H1 (cell line): ENCODE measurements at regions of chr1 and their contacts with region 1.

Region 1: GRCh38 chr1:235971571-235972310 is 93.1 kb downstream of the NID1 start:
- DNase-seq: peak; percentile 79 to 94
- H3K4me3 ChIP-seq: peak overlapping the region; percentile 32 to 60 (median 46); a peak in 6 of 8 replicates
- H3K27ac ChIP-seq: peak overlapping the region; percentile 73; the same call in 1 of the 2 replicates
- H3K4me1 ChIP-seq: 0 out of 7 replicates have a peak, but pooled peaks cover 0 to 3% (median 0%) of the 10 kb centered on the region in 4 experiments
- H3K27me3 ChIP-seq: no peaks in the 10 kb centered on the region
- CTCF ChIP-seq: peak; percentile 70 to 88 (median 82)
- EP300 ChIP-seq: 0 out of 3 replicates have a peak, but pooled peaks of 1 of the 2 experiments have one; percentile 8
- POLR2A ChIP-seq: peak; percentile 60 to 78
- RAD21 ChIP-seq: peak; percentile 90 to 93

Region 2: GRCh38 chr1:235783148-235783776 is 188.5 kb before region 1 on chr1:
- CTCF ChIA-PET with region 1: interaction called, 19 read pairs
- POLR2A ChIA-PET with region 1: no interaction called
- DNase-seq: no peak
- H3K4me3 ChIP-seq: no peak overlapping the region
- H3K27ac ChIP-seq: no peak overlapping the region
- H3K4me1 ChIP-seq: no peaks in the 10 kb centered on the region
- H3K27me3 ChIP-seq: no peaks in the 10 kb centered on the region
- CTCF ChIP-seq: peak in 1 of 3 experiments; percentile 12; a peak in 1 of 4 replicates
- EP300 ChIP-seq: no peak
- POLR2A ChIP-seq: no peak
- RAD21 ChIP-seq: peak in 1 of 2 experiments; percentile 65; a peak in 3 of 4 replicates

Region 3: DNA sequence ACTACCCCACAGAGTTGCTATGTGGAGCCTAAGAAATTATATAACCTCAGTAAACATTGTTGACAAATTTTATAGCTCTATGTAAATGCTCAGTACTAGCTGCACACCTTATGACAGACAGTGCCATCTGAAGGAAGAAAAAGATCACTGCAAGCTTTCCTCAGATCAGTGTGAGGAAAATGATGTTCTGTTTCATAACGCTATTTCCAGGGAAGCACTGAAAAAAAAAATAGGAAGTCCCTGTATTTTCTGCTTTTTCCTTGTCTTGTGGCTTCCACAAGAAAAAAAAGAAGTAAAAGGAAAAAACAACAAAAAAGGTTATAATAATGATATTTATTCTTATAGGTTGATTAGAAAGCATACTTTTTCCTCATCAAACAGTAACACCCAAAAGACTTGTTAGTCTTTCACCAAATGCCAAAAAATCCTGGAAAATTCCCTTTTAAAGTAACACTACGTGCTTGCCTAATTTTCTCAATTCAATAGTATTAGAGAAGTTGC is 128.2 kb before region 1 on chr1:
- CTCF ChIA-PET with region 1: interaction called, 18 read pairs
- POLR2A ChIA-PET with region 1: no interaction called
- DNase-seq: no peak
- H3K4me3 ChIP-seq: no peak overlapping the region
- H3K27ac ChIP-seq: no peak overlapping the region
- H3K4me1 ChIP-seq: no peaks in the 10 kb centered on the region
- H3K27me3 ChIP-seq: no peaks in the 10 kb centered on the region
- CTCF ChIP-seq: peak in 2 of 3 experiments; percentile 22 to 41; a peak in 2 of 4 replicates
- EP300 ChIP-seq: no peak
- POLR2A ChIP-seq: no peak
- RAD21 ChIP-seq: peak; percentile 54 to 61

Region 4: GRCh38 chr1:235883261-235883927 is 88.3 kb before region 1 on chr1:
- CTCF ChIA-PET with region 1: no interaction called
- POLR2A ChIA-PET with region 1: no interaction called
- DNase-seq: no peak
- H3K4me3 ChIP-seq: no peak overlapping the region
- H3K27ac ChIP-seq: no peak overlapping the region
- H3K4me1 ChIP-seq: no peaks in the 10 kb centered on the region
- H3K27me3 ChIP-seq: no peaks in the 10 kb centered on the region
- CTCF ChIP-seq: no peak
- EP300 ChIP-seq: no peak
- POLR2A ChIP-seq: no peak
- RAD21 ChIP-seq: no peak

Region 5: DNA sequence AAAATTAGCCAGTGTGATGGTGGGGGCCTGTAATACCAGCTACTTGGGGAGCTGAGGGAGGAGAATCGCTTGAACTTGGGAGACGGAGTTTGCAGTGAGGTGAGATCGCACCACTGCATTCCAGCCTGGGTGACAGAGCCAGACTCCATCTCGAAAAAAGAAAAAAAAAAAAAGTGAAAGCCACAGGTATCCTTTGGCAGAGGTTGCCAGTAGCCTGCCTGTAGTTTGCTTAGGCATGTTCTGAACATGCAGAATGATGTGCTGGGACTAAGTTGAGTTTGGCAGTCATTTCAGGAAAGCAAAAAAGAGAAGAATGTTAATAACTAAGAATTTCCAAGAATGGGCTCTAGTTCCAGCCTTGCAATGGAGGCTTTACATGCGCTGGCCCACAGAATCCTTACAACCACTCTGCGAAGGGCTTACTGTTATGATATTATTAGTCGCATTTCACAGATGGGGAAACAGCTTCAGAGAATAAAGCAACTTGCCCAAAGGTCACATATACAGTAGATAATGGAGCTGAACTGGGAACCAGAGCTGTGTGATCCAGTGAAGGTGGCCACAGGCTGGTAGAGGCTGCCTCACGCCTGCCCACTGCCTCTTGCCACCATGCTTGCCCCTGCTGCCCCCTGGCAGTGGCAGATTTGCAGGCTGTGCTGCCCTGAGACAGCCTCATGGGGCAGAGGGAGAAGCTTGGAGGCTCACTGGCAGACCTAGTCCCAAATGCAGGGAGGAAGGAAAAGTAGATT is 38.5 kb before region 1 on chr1:
- CTCF ChIA-PET with region 1: interaction called, 11 read pairs
- POLR2A ChIA-PET with region 1: no interaction called
- DNase-seq: no peak
- H3K4me3 ChIP-seq: no peak overlapping the region
- H3K27ac ChIP-seq: no peak overlapping the region
- H3K4me1 ChIP-seq: peaks cover 0 to 3% (median 0%) of the 10 kb centered on the region in 4 experiments; a peak in 2 of 7 replicates
- H3K27me3 ChIP-seq: peaks cover 0 to 4% (median 1%) of the 10 kb centered on the region in 4 experiments; a peak in 3 of 7 replicates
- CTCF ChIP-seq: peak; percentile 22 to 33 (median 30)
- EP300 ChIP-seq: no peak
- POLR2A ChIP-seq: no peak
- RAD21 ChIP-seq: peak in 1 of 2 experiments; percentile 16; a peak in 1 of 4 replicates

Region 6: GRCh38 chr1:235960809-235961208 is 10.9 kb before region 1 on chr1:
- CTCF ChIA-PET with region 1: interaction called, 16 read pairs
- POLR2A ChIA-PET with region 1: interaction called, 3 read pairs
- DNase-seq: no peak
- H3K4me3 ChIP-seq: no peak overlapping the region
- H3K27ac ChIP-seq: no peak overlapping the region
- H3K4me1 ChIP-seq: no peaks in the 10 kb centered on the region; a peak in 2 of 7 replicates
- H3K27me3 ChIP-seq: no peaks in the 10 kb centered on the region; a peak in 1 of 7 replicates
- CTCF ChIP-seq: no peak
- EP300 ChIP-seq: no peak
- POLR2A ChIP-seq: no peak
- RAD21 ChIP-seq: no peak

Region 7: DNA sequence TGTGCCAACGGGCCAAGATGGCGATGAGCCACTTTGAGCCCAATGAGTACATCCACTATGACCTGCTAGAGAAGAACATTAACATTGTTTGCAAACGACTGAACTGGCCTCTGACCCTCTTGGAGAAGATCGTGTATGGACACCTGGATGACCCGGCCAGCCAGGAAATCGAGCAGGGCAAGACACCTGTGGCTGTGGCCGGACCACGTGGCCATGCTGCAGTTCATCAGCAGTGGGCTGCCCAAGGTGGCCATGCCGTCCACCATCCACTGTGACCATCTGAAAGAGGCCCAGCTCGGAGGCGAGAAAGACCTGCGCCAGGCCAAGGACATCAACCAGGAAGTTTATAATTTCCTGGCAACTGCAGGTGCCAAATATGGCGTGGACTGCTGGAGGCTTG is 138.4 kb after region 1 on chr1:
- CTCF ChIA-PET with region 1: no interaction called
- POLR2A ChIA-PET with region 1: no interaction called
- DNase-seq: no peak
- H3K4me3 ChIP-seq: no peak overlapping the region
- H3K27ac ChIP-seq: no peak overlapping the region
- H3K4me1 ChIP-seq: no peaks in the 10 kb centered on the region
- H3K27me3 ChIP-seq: no peaks in the 10 kb centered on the region
- CTCF ChIP-seq: no peak
- EP300 ChIP-seq: no peak
- POLR2A ChIP-seq: no peak
- RAD21 ChIP-seq: no peak